PC-3 (cell line): ENCODE measurements at regions of chr2 and their contacts with region 1.

Region 1: DNA sequence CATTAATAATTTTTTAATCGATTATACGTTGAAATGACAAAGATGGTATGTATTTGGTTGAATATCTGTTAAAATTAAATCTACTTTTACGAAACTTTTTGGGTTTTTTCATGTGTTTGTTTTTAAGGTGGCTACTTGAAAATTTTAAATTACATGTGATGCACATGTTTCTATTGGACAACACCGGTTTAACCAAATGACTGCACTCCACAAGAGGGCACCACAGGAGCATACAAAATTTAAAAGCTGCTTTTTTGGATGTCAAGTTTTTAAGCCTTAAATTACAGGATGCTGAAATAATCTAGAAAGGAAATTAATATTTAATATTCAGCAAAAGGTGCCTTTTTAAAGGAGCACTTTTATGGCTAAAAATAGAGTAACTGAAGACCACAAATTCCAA is 98.7 kb downstream of the ACVR1 start:
- DNase-seq: peak; percentile 77
- ATAC-seq: peak; percentile 37
- H3K4me3 ChIP-seq: no peak overlapping the region
- H3K27ac ChIP-seq: no peak overlapping the region
- H3K4me1 ChIP-seq: no peaks in the 10 kb centered on the region
- H3K27me3 ChIP-seq: no peaks in the 10 kb centered on the region
- CTCF ChIP-seq: peak; percentile 86

Region 2: DNA sequence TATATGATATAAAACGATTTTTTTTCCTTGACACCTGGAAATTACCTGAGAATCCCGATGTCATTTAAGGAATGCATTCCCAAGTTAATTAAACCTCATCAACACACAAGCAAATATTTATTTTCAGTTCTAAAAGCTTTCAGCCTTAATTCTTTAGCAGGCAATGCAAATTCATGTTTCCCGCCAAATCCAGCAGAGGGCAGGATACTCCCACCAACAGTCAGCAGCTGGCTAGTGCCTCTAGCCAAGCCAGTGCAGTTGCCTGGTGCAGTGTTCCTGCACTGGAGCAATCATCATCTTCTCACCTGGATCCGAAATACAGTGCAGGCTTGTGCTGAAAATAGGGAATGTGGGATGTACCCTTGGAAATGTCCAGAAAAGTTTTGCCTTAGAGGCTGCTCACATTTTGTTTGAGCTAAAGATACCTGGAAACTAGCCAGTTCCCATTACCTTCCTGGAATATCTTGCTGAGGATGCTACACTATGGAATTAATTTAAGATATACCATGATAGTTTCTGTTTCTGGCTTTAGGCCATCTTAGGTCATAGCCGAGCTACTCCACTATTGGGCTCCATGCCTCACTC is 285.1 kb before region 1 on chr2:
- CTCF ChIA-PET with region 1: no interaction called
- POLR2A ChIA-PET with region 1: no interaction called
- intact Hi-C with region 1: loop called (anchors 10 kb)
- DNase-seq: peak; percentile 77
- ATAC-seq: peak; percentile 82
- H3K4me3 ChIP-seq: no peak overlapping the region
- H3K27ac ChIP-seq: no peak overlapping the region
- H3K4me1 ChIP-seq: peaks cover 12% of the 10 kb centered on the region
- H3K27me3 ChIP-seq: no peaks in the 10 kb centered on the region
- CTCF ChIP-seq: peak; percentile 87

Region 3: GRCh38 chr2:157825885-157826284 is 48.5 kb after region 1 on chr2:
- CTCF ChIA-PET with region 1: interaction called, 11 read pairs
- POLR2A ChIA-PET with region 1: no interaction called
- intact Hi-C with region 1: no loop called
- DNase-seq: peak; percentile 78
- ATAC-seq: peak; percentile 63
- H3K4me3 ChIP-seq: no peak overlapping the region
- H3K27ac ChIP-seq: peak overlapping the region; percentile 47
- H3K4me1 ChIP-seq: peaks cover 20% of the 10 kb centered on the region
- H3K27me3 ChIP-seq: no peaks in the 10 kb centered on the region
- CTCF ChIP-seq: no peak

Region 4: GRCh38 chr2:157989227-157989626 is 211.8 kb after region 1 on chr2:
- CTCF ChIA-PET with region 1: no interaction called
- POLR2A ChIA-PET with region 1: no interaction called
- intact Hi-C with region 1: loop called (anchors 1 kb)
- DNase-seq: no peak
- ATAC-seq: 0 out of 2 replicates have a peak, but pooled peaks have one; percentile 31
- H3K4me3 ChIP-seq: no peak overlapping the region
- H3K27ac ChIP-seq: no peak overlapping the region
- H3K4me1 ChIP-seq: no peaks in the 10 kb centered on the region
- H3K27me3 ChIP-seq: no peaks in the 10 kb centered on the region
- CTCF ChIP-seq: peak; percentile 29; the same call in 1 of the 2 replicates

Region 5: GRCh38 chr2:158502974-158503373 is 725.5 kb after region 1 on chr2:
- CTCF ChIA-PET with region 1: no interaction called
- POLR2A ChIA-PET with region 1: no interaction called
- intact Hi-C with region 1: no loop called
- DNase-seq: peak; percentile 42
- ATAC-seq: no peak
- H3K4me3 ChIP-seq: no peak overlapping the region
- H3K27ac ChIP-seq: no peak overlapping the region
- H3K4me1 ChIP-seq: peaks cover 4% of the 10 kb centered on the region
- H3K27me3 ChIP-seq: no peaks in the 10 kb centered on the region
- CTCF ChIP-seq: no peak